Dendritic cell treated with granulocyte-macrophage colony-stimulating factor and Interleukin-4, amounts not matched to agents 40 ng/mL and 50 ng/mL, for 4 days (primary cell): ENCODE measurements at regions of chr1 and their contacts with region 1.

Region 1: GRCh38 chr1:67561704-67562113 is 123.3 kb upstream of the GADD45A start:
- H3K4me3 Mint-ChIP-seq: no peak overlapping the region
- H3K27ac Mint-ChIP-seq: no peak overlapping the region
- H3K4me1 Mint-ChIP-seq: peaks cover 39% of the 10 kb centered on the region
- H3K27me3 Mint-ChIP-seq: no peaks in the 10 kb centered on the region

Region 2: GRCh38 chr1:67685067-67685557 is 123.4 kb after region 1 on chr1 and contains the start of gene GADD45A:
- intact Hi-C with region 1: loop called (anchors 5 kb)
- H3K4me3 Mint-ChIP-seq: peak within 1 kb of the TSS; percentile 92
- H3K27ac Mint-ChIP-seq: peak within 1 kb of the TSS; percentile 89
- H3K4me1 Mint-ChIP-seq: peaks cover 50% of the 10 kb centered on the region
- H3K27me3 Mint-ChIP-seq: no peaks in the 10 kb centered on the region

Region 3: GRCh38 chr1:67749844-67750689 is 188.4 kb after region 1 on chr1:
- intact Hi-C with region 1: loop called (anchors 10 kb)
- H3K4me3 Mint-ChIP-seq: no peak overlapping the region
- H3K27ac Mint-ChIP-seq: no peak overlapping the region
- H3K4me1 Mint-ChIP-seq: peaks cover 35% of the 10 kb centered on the region
- H3K27me3 Mint-ChIP-seq: peaks cover 6% of the 10 kb centered on the region